Psoas muscle (tissue), 8 donors: ENCODE measurements at regions of chr1 and their contacts with region 1.

Region 1: DNA sequence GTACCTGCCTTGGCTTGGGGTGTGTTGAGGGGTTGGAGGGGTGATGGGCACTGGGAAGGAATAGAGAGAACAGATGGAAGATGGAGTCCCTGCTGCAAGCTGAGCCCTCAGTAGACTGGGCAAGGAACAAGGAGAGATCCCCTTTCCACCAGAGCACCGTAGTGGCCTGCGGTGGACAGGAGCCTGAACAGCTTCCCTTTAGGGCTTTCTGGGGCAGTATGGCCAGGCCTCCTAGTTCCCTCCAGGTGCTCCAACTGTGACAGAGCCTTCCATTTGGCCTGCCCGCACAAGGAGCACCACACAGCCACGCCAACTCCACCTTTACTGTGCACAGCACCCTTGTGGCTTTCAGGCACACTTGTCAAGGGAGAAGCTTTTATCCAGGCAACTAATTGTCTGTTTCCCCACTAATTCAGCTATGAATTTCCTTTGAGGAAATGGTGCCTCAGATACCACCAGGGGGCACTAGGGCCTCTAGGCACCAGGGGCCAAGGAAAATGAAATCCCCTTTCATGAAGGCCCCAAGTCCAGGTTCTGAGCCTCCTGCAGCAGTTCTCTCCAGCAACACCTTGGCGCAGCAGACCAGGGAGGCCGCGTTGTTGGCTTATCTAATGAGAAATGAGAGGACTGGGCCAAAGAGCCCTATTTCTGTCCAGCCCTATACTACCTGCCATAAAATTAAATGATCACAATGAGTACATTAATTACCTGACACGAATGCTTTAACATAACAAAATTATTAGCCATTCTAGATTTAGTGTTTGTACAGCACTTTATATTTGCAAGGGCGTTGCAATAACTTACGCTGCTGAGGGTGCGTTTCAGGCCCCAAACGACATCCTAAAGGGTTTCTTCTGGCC is 23.1 kb upstream of the ERI3 start:
- DNase-seq: peak in 1 of 2 donors; percentile 28
- ATAC-seq: no peak
- H3K4me3 ChIP-seq: no peak overlapping the region
- H3K27ac ChIP-seq: no peak overlapping the region
- H3K4me1 ChIP-seq: no peaks in the 10 kb centered on the region
- H3K27me3 ChIP-seq: no peaks in the 10 kb centered on the region
- CTCF ChIP-seq: peak; percentile 54

Region 2: DNA sequence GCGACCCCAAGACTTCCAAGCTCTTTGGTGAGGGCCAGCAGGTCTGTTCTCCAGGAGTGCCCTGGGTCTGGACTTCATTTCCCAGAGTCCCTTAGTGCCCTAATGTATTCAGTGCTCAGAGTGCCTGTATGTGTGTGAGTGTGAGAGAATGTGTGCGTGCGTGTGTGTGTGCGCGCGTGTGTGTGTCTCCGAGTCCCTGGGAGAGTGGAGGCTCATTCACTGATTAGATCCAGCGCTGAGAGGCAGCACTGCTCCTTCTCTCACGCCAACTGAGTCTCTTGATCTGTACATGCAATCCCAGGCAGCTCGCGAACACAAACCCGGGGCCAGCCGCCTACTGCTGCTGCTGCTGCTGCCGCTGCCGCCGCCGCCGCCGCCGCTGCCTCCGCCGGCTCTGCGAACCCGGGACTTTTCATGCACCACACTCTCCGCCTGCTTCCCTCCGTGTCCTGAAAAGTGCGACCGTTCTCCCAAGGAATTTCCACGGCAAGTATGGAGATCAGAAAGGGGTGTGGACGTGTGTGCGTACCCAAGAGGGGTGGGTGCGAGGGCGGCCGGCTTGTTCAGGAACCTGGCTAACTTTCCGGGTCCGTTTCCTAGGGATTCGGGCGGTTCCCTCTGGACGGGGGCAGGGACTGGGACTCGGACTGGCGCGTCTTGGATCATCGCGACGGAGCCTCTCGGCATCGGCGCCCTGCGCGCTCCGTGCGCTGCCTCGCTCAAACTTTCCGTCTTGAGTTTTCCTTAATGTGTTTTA is 27.1 kb after region 1 on chr1 and contains the start of gene RNF220:
- intact Hi-C with region 1: loop called in 1 of 2 experiments (anchors 2 kb)
- DNase-seq: peak; percentile 26 to 62
- ATAC-seq: peak in 3 of 4 donors; percentile 54 to 66 (median 62)
- H3K4me3 ChIP-seq: peak within 1 kb of the TSS; percentile 64
- H3K27ac ChIP-seq: peak within 1 kb of the TSS; percentile 30
- H3K4me1 ChIP-seq: peaks cover 25% of the 10 kb centered on the region
- H3K27me3 ChIP-seq: peaks cover 8 to 99% (median 41%) of the 10 kb centered on the region in 3 donors
- CTCF ChIP-seq: no peak
- total RNA-seq, gene RNF220: 61.1 to 91.9 (median 69.0) TPM

Region 3: GRCh38 chr1:44594871-44595746 is 217.0 kb after region 1 on chr1:
- intact Hi-C with region 1: loop called (anchors 2 to 5 kb)
- DNase-seq: peak; percentile 79 to 90
- ATAC-seq: peak; percentile 88 to 98 (median 92)
- H3K4me3 ChIP-seq: no peak overlapping the region
- H3K27ac ChIP-seq: no peak overlapping the region
- H3K4me1 ChIP-seq: no peaks in the 10 kb centered on the region
- H3K27me3 ChIP-seq: peaks cover 0 to 7% (median 2%) of the 10 kb centered on the region in 3 donors
- CTCF ChIP-seq: peak; percentile 95